ENCODE measurements at regions of chr14 and their contacts with region 1.

Region 1: GRCh38 chr14:28671425-28671824 is 95.2 kb upstream of the FOXG1 start:
- DNase-seq: peak in 1 of 2 experiments; percentile 37
- H3K4me3 ChIP-seq: no peak overlapping the region
- H3K27ac ChIP-seq: no peak overlapping the region
- H3K4me1 ChIP-seq: peaks cover 30% of the 10 kb centered on the region
- H3K27me3 ChIP-seq: no peaks in the 10 kb centered on the region
- CTCF ChIP-seq: no peak

Region 2: GRCh38 chr14:28681683-28682082 is 10.3 kb after region 1 on chr14:
- CTCF ChIA-PET with region 1: no interaction called
- POLR2A ChIA-PET with region 1: no interaction called
- intact Hi-C with region 1: no loop called
- DNase-seq: no peak
- H3K4me3 ChIP-seq: no peak overlapping the region
- H3K27ac ChIP-seq: no peak overlapping the region
- H3K4me1 ChIP-seq: peaks cover 5% of the 10 kb centered on the region
- H3K27me3 ChIP-seq: no peaks in the 10 kb centered on the region
- CTCF ChIP-seq: no peak

Region 3: DNA sequence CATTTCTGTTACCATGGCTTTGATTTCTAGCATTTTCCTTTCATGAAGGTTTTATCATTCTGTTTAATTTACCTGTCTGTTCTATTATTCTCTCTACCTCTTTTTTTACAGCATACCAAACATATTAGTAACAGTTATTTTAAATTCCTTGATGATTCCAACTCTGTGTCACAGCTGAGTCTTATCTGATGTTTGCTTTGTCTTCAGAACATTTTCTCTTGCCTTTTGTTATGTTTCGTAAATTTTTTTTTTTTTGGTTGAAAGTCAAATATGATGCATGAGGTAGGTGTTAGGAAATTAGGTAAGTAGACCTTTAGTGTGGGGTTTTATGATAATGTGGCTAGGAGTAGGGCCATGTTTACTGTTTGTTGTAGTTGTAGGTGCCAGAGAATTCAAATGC is 591.6 kb after region 1 on chr14:
- CTCF ChIA-PET with region 1: interaction called, 10 read pairs
- POLR2A ChIA-PET with region 1: no interaction called
- intact Hi-C with region 1: no loop called
- DNase-seq: no peak
- H3K4me3 ChIP-seq: no peak overlapping the region
- H3K27ac ChIP-seq: no peak overlapping the region
- H3K4me1 ChIP-seq: no peaks in the 10 kb centered on the region
- H3K27me3 ChIP-seq: no peaks in the 10 kb centered on the region
- CTCF ChIP-seq: no peak

Region 4: DNA sequence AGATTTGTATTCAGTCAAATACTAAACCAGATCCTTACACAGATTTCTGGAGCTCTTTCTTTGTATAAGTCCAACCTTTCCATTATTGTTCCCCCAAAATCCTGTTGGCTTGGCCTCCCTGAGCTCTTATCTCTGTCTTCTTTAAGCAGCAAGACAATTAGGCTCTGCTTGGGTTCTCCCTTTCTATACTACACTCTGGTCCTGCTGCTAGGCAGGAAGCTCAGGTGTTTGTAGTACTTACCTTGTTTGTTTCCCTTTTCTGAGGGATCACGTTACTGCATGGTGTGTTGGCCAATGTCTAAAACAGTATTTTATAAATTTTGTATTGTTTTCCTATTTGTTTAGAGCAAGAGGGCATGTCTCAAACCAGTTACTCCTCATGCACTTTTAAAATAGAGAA is 1063.3 kb after region 1 on chr14:
- CTCF ChIA-PET with region 1: no interaction called
- POLR2A ChIA-PET with region 1: no interaction called
- intact Hi-C with region 1: no loop called
- DNase-seq: no peak
- H3K4me3 ChIP-seq: no peak overlapping the region
- H3K27ac ChIP-seq: no peak overlapping the region
- H3K4me1 ChIP-seq: no peaks in the 10 kb centered on the region
- H3K27me3 ChIP-seq: no peaks in the 10 kb centered on the region
- CTCF ChIP-seq: no peak